Activated T-helper 1 cell treated with anti-CD3 and anti-CD28 coated beads, Interleukin-12 subunit alpha, Interleukin-12 subunit beta, Interleukin-2, Interleukin-4 antibody, amounts not matched to agents 30 ng/mL and 10 ng/mL and 1 ng/mL, durations not matched to agents 14 hours and 24 hours and 36 hours (primary cell): ENCODE measurements at regions of chr22 and their contacts with region 1.

Region 1: DNA sequence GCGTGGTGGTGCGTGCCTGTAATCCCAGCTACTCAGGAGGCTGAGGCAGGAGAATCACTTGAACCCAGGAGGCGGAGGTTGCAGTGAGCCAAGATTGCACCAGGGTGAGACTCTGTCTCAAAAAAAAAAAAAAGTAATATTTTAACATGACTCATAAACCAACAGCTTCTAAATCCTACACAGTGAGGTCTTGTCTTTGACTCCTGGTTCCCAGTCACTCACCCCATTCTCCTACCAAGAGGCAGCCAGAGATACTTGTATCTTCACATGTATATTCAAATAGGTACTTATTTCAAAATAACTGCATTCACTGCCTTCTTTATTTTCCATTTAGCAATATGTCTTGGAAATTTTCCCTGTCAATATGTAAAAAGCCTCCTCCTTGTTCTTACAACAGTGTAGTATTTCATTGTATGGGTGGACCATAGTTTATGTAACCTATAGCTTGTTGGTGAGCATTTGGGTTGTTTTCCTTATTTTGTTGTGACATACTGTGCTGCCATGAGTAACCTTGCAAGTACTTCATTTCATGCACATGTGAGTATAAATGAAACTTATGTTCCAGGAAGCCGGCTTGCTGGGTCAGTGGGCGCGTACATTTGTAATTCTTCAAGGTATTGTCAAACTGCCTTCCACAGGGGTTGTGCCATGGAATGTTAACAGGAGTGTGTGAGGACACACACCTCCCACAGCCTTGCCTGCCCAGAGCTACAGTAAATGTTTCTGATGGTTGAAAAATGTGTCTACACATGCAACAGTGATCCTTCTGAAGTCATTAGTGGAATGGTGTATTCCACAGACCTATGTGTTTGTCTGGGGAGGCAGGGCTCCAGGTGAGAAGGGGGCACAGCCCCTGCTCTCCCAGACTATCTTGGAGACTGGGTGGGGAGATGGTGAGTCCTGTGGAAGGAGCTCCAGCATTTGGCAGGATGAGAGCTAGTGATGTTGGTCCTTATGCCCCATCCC is 47.9 kb downstream of the OSBP2 start:
- DNase-seq: no peak
- H3K4me3 Mint-ChIP-seq: peak overlapping the region; percentile 48
- H3K27ac Mint-ChIP-seq: peak overlapping the region; percentile 96
- H3K4me1 Mint-ChIP-seq: peaks cover 81% of the 10 kb centered on the region
- H3K27me3 Mint-ChIP-seq: no peaks in the 10 kb centered on the region

Region 2: DNA sequence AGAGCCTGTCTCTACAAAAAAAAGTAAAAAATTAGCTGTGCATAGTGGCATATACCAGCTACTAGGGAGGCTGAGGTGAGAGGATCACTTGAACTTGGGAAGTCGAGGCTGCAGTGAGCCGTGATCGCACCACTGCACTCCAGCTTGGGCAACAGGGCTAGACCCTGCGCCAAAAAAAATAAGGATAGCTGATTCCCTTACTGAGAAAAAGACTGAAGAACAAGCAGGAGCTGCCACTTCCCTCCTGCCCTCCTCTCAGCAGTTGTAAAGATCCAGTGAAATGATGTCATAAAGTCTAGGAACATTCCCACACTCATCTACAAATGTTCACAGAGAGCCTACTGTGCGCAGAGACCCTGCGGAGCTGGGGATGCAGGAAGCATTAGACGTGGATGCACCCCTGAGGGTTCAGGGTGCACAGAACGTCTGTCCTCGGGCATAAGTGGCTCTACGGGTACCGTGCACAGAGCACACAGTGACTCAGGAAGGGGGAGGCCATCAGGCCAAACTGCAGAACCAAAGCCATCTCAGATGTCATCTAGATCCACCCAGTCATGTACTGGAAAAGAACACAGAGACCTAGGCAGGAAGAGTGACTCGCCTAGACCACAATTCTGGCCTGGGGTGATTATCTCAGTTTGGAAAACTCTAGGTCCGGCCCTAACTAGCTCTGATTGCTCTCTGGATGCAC is 334.0 kb before region 1 on chr22:
- intact Hi-C with region 1: no loop called
- DNase-seq: no peak
- H3K4me3 Mint-ChIP-seq: no peak overlapping the region
- H3K27ac Mint-ChIP-seq: peak overlapping the region; percentile 7
- H3K4me1 Mint-ChIP-seq: peaks cover 27% of the 10 kb centered on the region
- H3K27me3 Mint-ChIP-seq: no peaks in the 10 kb centered on the region

Region 3: DNA sequence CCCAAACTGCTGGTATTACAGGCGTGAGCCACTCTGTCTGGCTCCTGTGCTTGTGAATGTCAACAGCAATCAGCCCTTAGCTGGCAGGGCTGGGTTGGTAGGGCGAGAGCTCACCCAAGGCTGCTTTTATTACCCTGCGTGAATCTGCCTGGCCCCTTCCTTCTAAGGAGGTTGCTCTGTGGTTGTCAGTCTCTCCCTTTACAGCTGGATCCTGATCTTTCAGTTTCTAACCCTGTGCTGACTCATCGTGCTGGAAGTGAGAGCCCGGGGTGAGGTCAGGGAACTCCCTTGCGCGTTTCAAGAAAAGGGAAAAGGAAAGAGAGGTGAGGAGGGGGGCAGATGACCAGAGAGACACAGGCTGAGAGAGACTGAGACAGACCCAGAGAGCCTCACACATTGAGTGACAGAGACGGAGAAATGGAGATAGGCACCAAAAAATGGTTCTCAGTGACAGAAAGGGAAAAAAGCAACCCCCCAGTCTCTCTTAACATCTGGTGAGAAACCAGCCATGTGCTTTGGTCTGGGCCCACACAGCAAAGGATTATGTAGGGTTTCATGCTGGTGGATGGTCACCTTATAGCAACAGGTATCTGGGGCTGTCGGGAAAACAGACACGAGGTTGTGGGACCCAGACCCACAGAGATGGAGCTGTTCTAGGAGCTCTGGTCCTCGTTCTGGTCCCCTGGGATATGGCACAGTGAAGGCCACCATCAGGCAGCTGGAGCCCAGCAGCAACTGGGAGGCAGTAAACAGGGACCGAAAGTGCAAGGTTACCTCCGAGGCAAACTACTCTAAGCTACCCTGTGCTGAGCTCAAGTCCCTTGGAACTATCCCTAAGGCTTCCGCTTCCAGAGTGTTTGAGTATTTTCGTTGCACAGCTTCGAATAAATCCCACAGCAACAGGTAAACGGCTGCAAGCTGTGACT is 133.1 kb before region 1 on chr22:
- intact Hi-C with region 1: loop called (anchors 1 kb)
- DNase-seq: peak; percentile 52
- H3K4me3 Mint-ChIP-seq: peak overlapping the region; percentile 38
- H3K27ac Mint-ChIP-seq: peak overlapping the region; percentile 66
- H3K4me1 Mint-ChIP-seq: peaks cover 61% of the 10 kb centered on the region
- H3K27me3 Mint-ChIP-seq: no peaks in the 10 kb centered on the region

Region 4: GRCh38 chr22:30667494-30668385 is 74.8 kb before region 1 on chr22 and contains the start of gene DUSP18:
- intact Hi-C with region 1: loop called (anchors 1 kb)
- DNase-seq: peak; percentile 92
- H3K4me3 Mint-ChIP-seq: peak within 1 kb of the TSS; percentile 93
- H3K27ac Mint-ChIP-seq: peak within 1 kb of the TSS; percentile 83
- H3K4me1 Mint-ChIP-seq: peaks cover 32% of the 10 kb centered on the region
- H3K27me3 Mint-ChIP-seq: peaks cover 7% of the 10 kb centered on the region
- total RNA-seq, gene DUSP18: 9.6 and 9.8 TPM in 2 replicates

Region 5: GRCh38 chr22:30705710-30706651 is 36.6 kb before region 1 on chr22:
- intact Hi-C with region 1: loop called (anchors 2 kb)
- DNase-seq: no peak
- H3K4me3 Mint-ChIP-seq: no peak overlapping the region
- H3K27ac Mint-ChIP-seq: peak overlapping the region; percentile 41
- H3K4me1 Mint-ChIP-seq: peaks cover 31% of the 10 kb centered on the region
- H3K27me3 Mint-ChIP-seq: no peaks in the 10 kb centered on the region

Region 6: DNA sequence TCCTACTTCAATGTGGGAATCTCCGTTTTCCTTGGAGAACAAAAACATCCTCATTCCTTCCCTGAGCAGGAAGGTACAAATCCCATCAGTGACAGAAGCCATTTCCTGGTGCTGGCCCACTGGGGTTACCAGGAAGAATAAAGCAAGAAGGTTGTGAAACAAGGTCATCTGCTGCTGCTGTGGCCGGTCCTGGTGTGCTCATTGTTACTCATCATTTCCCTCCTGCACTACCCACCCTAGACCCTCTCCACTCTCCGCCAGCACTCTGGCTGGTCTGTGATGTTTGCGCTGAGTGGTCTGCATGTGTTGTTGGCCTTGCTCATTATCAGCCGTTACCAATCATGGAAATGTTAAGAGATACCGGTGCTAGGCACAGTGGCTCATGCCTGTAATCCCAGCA is 10.9 kb before region 1 on chr22:
- intact Hi-C with region 1: no loop called
- DNase-seq: no peak
- H3K4me3 Mint-ChIP-seq: no peak overlapping the region
- H3K27ac Mint-ChIP-seq: no peak overlapping the region
- H3K4me1 Mint-ChIP-seq: peaks cover 6% of the 10 kb centered on the region
- H3K27me3 Mint-ChIP-seq: no peaks in the 10 kb centered on the region

Region 7: GRCh38 chr22:30777587-30777986 is 35.0 kb after region 1 on chr22:
- intact Hi-C with region 1: no loop called
- DNase-seq: no peak
- H3K4me3 Mint-ChIP-seq: no peak overlapping the region
- H3K27ac Mint-ChIP-seq: no peak overlapping the region
- H3K4me1 Mint-ChIP-seq: peaks cover 7% of the 10 kb centered on the region
- H3K27me3 Mint-ChIP-seq: no peaks in the 10 kb centered on the region